Naive thymus-derived CD4-positive, alpha-beta T cell (primary cell): ENCODE measurements at regions of chr13 and their contacts with region 1.

Region 1: DNA sequence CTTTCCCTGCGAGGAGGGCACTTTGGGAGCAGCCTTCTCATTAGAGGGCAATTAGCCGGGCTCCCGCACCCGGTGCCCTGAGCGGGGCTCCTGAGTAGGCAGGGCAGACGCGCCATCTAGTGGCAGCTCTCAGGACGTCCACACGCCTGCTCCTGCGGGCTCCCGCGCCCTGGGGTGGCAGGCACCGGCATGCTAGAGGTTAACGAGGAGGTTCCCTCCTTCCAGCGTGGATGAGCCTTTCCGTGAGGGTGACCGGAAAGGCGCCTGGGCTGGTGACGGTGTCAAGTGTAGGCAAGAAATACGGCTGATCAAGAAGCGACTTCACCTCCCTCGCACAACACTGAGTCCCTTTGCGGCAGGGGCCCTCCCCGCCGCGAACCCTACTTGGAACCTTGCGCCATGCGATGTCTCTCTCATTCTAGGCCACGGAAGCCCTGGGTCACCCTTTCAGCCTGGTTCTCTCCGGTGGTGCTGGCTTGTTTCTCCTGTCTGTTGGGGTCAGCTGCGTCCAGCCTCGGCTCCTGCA is 67.7 kb downstream of the ALOX5AP start:
- DNase-seq: peak; percentile 54 to 83 (median 70)
- ATAC-seq: peak; percentile 97
- H3K4me3 ChIP-seq: peak overlapping the region; percentile 27
- H3K4me3 Mint-ChIP-seq: peak overlapping the region; percentile 17 to 75 (median 51)
- H3K27ac ChIP-seq: no peak overlapping the region
- H3K27ac Mint-ChIP-seq: peak overlapping the region in 1 of 9 donors; percentile 12
- H3K4me1 ChIP-seq: peaks cover 3 to 7% of the 10 kb centered on the region in 2 donors
- H3K4me1 Mint-ChIP-seq: peaks cover 5 to 19% (median 10%) of the 10 kb centered on the region in 7 donors
- H3K27me3 ChIP-seq: no peaks in the 10 kb centered on the region
- H3K27me3 Mint-ChIP-seq: peaks cover 0 to 5% (median 0%) of the 10 kb centered on the region in 5 donors

Region 2: DNA sequence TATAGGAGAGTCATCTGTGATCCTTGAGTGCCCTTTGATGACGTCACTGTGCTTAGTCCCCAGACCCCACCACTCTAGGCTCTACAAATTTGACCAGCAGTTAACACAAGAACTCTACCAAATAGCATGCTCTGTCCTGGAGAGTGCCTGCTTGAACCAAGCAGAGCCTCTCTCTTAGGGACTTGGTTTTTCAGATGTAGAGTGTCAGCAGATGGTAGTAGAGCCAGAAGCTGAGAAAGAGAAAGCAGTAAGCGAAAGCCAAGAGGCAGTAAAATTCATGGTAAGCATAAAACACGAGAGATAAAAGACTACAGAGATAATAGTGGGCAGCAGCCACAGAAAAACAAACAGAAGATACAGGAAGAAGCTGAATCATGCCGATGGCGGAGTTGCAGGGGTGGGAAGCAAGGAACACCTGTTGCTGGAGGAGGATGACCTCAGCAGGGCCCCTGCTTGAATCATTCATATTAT is 1400.8 kb before region 1 on chr13:
- CTCF ChIA-PET with region 1: no interaction called
- POLR2A ChIA-PET with region 1: no interaction called
- intact Hi-C with region 1: no loop called
- DNase-seq: no peak
- ATAC-seq: no peak
- H3K4me3 ChIP-seq: no peak overlapping the region
- H3K4me3 Mint-ChIP-seq: no peak overlapping the region
- H3K27ac ChIP-seq: no peak overlapping the region
- H3K27ac Mint-ChIP-seq: no peak overlapping the region
- H3K4me1 ChIP-seq: no peaks in the 10 kb centered on the region
- H3K4me1 Mint-ChIP-seq: no peaks in the 10 kb centered on the region
- H3K27me3 ChIP-seq: no peaks in the 10 kb centered on the region
- H3K27me3 Mint-ChIP-seq: peaks cover 0 to 29% (median 15%) of the 10 kb centered on the region in 5 donors

Region 3: DNA sequence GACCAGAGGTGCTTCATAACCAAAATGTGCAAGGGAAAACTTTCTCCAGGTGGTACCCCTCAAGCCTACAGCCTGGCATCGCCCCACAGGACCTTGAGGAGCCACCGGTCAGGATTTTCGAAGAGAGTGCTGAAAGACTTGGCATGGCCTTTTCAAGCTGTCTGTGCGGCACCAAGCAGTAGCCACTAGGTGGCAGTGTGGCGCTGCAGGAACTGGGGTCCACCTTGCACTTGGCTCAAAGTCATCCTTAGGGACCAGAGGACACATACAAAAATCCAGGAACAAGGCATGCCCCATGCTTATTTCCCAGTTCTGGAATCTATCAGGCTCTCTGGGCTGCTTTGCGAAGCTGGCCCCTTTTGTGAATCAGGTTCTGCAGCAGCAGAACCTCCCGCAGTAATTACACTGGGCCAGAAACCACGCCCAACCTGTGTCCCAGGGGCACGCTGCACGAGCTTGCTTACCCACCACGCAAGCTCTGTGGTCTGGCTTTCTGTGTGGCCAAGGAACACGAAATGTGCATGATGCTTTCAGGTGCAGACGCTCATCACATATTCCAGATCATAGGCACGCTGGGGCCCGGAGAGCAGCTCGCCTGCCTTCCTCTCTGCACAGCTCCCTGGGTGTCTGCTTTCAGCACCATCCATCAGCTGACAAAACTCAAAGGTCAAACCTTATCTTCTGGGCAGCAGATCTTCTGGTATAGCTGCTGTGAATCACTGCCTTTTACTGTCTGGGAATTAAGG is 1294.7 kb before region 1 on chr13:
- CTCF ChIA-PET with region 1: interaction called, 3 read pairs
- POLR2A ChIA-PET with region 1: no interaction called
- intact Hi-C with region 1: loop called in 1 of 2 experiments (anchors 2 kb)
- DNase-seq: peak; percentile 32 to 74 (median 61)
- ATAC-seq: peak; percentile 76
- H3K4me3 ChIP-seq: no peak overlapping the region
- H3K4me3 Mint-ChIP-seq: no peak overlapping the region
- H3K27ac ChIP-seq: no peak overlapping the region
- H3K27ac Mint-ChIP-seq: peak overlapping the region in 1 of 9 donors; percentile 21
- H3K4me1 ChIP-seq: no peaks in the 10 kb centered on the region
- H3K4me1 Mint-ChIP-seq: peaks cover 0 to 2% (median under 1%) of the 10 kb centered on the region in 7 donors
- H3K27me3 ChIP-seq: no peaks in the 10 kb centered on the region
- H3K27me3 Mint-ChIP-seq: peaks cover 3 to 6% (median 5%) of the 10 kb centered on the region in 5 donors

Region 4: GRCh38 chr13:30355384-30355699 is 447.7 kb before region 1 on chr13:
- CTCF ChIA-PET with region 1: no interaction called
- POLR2A ChIA-PET with region 1: no interaction called
- intact Hi-C with region 1: loop called in 1 of 2 experiments (anchors 2 kb)
- DNase-seq: peak in 3 of 9 donors; percentile 26 to 40 (median 28)
- ATAC-seq: peak; percentile 84
- H3K4me3 ChIP-seq: no peak overlapping the region
- H3K4me3 Mint-ChIP-seq: peak overlapping the region in 7 of 10 donors; percentile 14 to 61 (median 32)
- H3K27ac ChIP-seq: no peak overlapping the region
- H3K27ac Mint-ChIP-seq: peak overlapping the region in 3 of 9 donors; percentile 8 to 75 (median 39)
- H3K4me1 ChIP-seq: peaks cover 0 to 4% of the 10 kb centered on the region in 2 donors
- H3K4me1 Mint-ChIP-seq: peaks cover 10 to 40% (median 35%) of the 10 kb centered on the region in 7 donors
- H3K27me3 ChIP-seq: no peaks in the 10 kb centered on the region
- H3K27me3 Mint-ChIP-seq: no peaks in the 10 kb centered on the region

Region 5: DNA sequence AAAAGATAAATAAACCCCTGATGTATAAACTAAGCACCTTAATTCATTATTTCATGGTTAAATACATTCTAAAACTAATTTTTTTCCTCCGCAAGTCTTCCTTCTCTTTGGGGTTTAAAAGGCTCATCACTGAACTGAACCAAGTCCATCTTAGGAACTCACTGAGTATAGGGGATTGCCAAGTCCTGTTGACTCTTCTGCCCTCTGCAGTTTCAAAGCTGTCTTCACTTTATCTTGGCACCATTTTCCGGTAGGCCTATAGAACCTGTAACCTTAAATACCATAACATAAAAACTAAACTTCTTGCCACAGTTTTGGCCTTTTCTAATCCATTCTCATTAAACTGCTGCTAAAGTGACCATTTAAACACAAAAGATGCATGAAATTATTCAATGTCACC is 251.8 kb before region 1 on chr13:
- CTCF ChIA-PET with region 1: no interaction called
- POLR2A ChIA-PET with region 1: no interaction called
- intact Hi-C with region 1: loop called in 1 of 2 experiments (anchors 1 kb)
- DNase-seq: peak in 7 of 9 donors; percentile 22 to 63 (median 44)
- ATAC-seq: peak; percentile 82
- H3K4me3 ChIP-seq: no peak overlapping the region
- H3K4me3 Mint-ChIP-seq: no peak overlapping the region
- H3K27ac ChIP-seq: no peak overlapping the region
- H3K27ac Mint-ChIP-seq: peak overlapping the region in 1 of 9 donors; percentile 26
- H3K4me1 ChIP-seq: no peaks in the 10 kb centered on the region
- H3K4me1 Mint-ChIP-seq: peaks cover 0 to 6% (median 2%) of the 10 kb centered on the region in 7 donors
- H3K27me3 ChIP-seq: no peaks in the 10 kb centered on the region
- H3K27me3 Mint-ChIP-seq: peaks cover 0 to 11% (median 0%) of the 10 kb centered on the region in 5 donors

Region 6: DNA sequence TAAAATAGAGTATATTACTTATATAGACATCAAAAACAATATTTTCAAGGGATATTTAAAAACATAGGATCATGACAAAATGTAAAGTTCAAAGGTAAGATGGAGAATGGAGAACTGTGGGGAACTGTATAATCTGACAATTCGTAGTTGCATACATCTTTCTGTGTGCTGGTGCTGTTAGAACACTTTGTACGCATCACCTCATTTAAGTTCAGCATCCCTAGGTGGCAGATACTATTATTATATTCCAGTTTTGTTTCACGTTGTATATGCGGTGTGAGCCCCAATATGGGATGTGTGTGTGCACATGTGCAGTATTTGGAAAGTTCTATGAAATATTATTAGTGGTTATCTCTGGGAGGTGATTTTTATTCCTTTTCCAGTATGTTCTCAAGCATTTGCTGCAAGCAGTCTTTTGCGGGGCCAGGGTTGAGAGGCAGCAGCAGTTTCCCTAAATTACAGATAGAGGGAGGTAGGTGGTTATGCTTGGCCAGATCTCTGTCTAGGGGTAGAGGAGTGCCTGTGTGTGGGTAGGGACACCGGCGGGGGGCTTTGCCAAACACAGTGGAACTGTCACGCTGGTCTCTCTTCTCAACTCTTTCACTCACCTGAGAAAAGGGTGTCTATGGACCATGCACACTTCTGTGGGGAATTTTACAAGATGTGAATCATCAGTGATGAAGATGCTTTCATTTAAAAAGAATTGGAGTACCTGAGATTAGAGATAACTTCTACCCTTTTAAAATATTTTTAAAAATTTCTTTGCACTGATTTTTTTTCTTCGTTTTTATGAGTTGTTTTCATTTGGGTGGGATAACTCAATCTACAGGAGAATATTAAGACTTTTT is 123.3 kb before region 1 on chr13:
- CTCF ChIA-PET with region 1: interaction called, 5 read pairs
- POLR2A ChIA-PET with region 1: no interaction called
- intact Hi-C with region 1: loop called (anchors 1 kb)
- DNase-seq: peak in 6 of 9 donors; percentile 19 to 49 (median 36)
- ATAC-seq: peak; percentile 90
- H3K4me3 ChIP-seq: no peak overlapping the region
- H3K4me3 Mint-ChIP-seq: peak overlapping the region in 1 of 10 donors; percentile 1
- H3K27ac ChIP-seq: no peak overlapping the region
- H3K27ac Mint-ChIP-seq: peak overlapping the region in 5 of 9 donors; percentile 34 to 76 (median 42)
- H3K4me1 ChIP-seq: no peaks in the 10 kb centered on the region
- H3K4me1 Mint-ChIP-seq: peaks cover 4 to 15% (median 10%) of the 10 kb centered on the region in 7 donors
- H3K27me3 ChIP-seq: no peaks in the 10 kb centered on the region
- H3K27me3 Mint-ChIP-seq: peaks cover 0 to 26% (median 0%) of the 10 kb centered on the region in 5 donors

Region 7: DNA sequence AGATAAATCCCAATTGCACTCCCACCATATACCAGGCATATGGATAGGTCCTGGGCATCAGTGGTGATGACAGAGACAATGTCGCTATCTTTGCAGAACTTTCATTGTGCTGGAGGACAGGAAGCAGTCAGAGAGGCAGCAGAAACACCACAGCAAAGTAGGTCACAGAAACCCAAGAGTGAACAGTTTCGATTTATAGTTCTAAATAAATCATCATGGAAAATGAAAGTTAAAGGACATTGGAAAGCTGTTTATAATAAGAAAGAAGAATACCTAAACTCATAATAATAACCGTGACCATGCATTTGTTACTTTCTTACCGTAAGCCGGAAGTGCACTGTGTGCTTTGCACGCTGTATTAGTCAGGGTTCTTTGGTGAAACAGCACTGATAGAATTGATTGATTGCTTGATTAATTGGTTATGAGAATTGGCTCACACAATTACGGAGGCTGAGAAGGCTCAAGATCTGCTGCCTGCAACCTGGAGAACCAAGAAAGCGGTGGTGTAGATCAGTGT is 28.7 kb before region 1 on chr13:
- CTCF ChIA-PET with region 1: no interaction called
- POLR2A ChIA-PET with region 1: no interaction called
- intact Hi-C with region 1: no loop called
- DNase-seq: peak in 3 of 9 donors; percentile 3 to 13 (median 4)
- ATAC-seq: peak; percentile 71
- H3K4me3 ChIP-seq: peak overlapping the region; percentile 19
- H3K4me3 Mint-ChIP-seq: peak overlapping the region in 8 of 10 donors; percentile 14 to 59 (median 36)
- H3K27ac ChIP-seq: no peak overlapping the region
- H3K27ac Mint-ChIP-seq: peak overlapping the region in 3 of 9 donors; percentile 11 to 83 (median 16)
- H3K4me1 ChIP-seq: peaks cover 12 to 18% of the 10 kb centered on the region in 2 donors
- H3K4me1 Mint-ChIP-seq: peaks cover 8 to 22% (median 16%) of the 10 kb centered on the region in 7 donors
- H3K27me3 ChIP-seq: no peaks in the 10 kb centered on the region
- H3K27me3 Mint-ChIP-seq: peaks cover 0 to 6% (median 0%) of the 10 kb centered on the region in 5 donors